Psoas muscle (tissue), 8 donors: ENCODE measurements at regions of chr10 and their contacts with region 1.

Region 1: DNA sequence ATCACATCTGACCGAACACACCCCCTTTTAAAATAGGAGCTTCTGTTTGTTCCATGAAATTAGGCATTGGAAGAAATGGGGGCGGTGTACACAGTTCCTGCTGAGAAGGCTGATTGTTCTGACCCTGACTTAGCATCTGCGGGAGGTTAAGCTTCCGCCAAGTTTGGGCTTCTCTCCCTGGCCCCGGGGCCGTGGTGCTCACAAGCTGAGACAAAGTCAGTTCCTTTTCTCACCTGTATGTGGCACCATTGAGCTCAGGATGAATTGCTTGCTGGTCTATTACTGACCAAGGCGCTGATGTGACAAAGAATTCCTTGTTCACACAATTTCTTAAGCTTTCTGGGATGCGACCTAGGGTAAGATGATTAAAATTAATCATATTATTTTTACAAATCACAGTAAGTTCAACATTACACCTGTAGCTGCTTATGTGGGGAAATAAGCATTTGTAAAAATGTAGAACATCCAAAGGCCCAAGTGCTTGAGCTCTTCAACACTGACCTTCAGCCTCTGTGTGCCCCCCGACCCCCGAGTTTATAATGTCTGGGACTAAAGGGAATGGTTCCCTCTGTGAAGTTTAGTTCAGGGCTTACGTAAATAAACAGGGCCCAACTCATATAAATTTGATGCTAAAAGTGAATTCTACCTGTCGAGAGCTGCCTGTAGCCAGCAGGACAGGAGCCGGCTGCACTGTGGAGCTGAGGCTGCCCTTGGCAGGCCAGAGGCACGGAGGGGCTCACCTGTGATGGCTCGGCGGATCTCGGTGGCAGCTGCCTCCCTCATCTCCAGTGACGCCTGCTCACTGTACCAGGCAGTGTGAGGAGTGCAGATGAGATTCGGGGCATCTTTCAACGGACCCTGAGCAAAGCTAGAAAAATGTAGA is 50.8 kb downstream of the ZRANB1 start:
- DNase-seq: peak; percentile 72 to 90
- ATAC-seq: peak; percentile 65 to 69 (median 66)
- H3K4me3 ChIP-seq: no peak overlapping the region
- H3K27ac ChIP-seq: peak overlapping the region; percentile 42
- H3K4me1 ChIP-seq: peaks cover 16% of the 10 kb centered on the region
- H3K27me3 ChIP-seq: no peaks in the 10 kb centered on the region
- CTCF ChIP-seq: peak; percentile 74

Region 2: DNA sequence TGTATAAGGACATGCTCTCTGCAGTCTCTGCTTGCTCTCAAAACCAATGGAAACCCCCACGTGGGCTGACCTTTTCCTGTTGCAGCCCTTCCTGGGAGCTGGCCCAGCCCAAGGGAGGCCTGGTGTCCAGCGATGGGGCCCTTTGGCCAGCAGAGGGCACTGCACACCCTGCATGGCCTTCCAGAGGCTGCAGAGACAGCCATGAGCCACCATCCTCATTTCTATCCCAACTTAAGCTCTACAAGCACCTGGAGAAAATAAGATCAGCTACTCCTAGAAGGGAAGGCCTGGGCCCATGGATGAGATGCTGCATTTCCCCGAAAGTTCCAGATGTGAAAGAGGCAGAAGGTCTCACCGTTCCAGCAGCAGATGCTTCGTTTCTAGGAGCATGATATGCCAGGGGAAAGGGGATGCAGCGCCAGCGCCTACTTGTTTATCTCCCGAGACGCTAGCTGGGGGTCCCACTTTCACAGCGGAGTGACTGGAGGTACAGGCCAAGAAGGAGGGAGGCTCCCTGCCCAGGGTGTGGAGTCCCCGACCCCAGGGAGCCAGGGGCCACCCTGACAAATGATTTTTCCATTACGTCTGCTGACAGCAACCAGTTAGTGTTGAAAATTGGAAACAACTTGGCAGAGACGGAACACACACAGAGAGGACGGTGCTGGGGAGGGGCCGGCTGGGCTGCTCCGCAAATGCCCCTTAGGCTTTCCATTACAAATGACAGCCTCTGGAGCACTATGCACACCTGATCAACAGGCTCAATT is 55.6 kb after region 1 on chr10:
- intact Hi-C with region 1: loop called in 1 of 2 experiments (anchors 5 kb)
- DNase-seq: peak; percentile 87 to 93
- ATAC-seq: peak; percentile 83 to 91 (median 87)
- H3K4me3 ChIP-seq: no peak overlapping the region
- H3K27ac ChIP-seq: peak overlapping the region; percentile 11
- H3K4me1 ChIP-seq: peaks cover 74% of the 10 kb centered on the region
- H3K27me3 ChIP-seq: no peaks in the 10 kb centered on the region
- CTCF ChIP-seq: peak; percentile 99

Region 3: GRCh38 chr10:125071008-125071407 is 78.3 kb after region 1 on chr10:
- intact Hi-C with region 1: no loop called
- DNase-seq: no peak
- ATAC-seq: no peak
- H3K4me3 ChIP-seq: no peak overlapping the region
- H3K27ac ChIP-seq: no peak overlapping the region
- H3K4me1 ChIP-seq: peaks cover 46% of the 10 kb centered on the region
- H3K27me3 ChIP-seq: no peaks in the 10 kb centered on the region
- CTCF ChIP-seq: no peak